H1 (cell line): ENCODE measurements at regions of chr1 and their contacts with region 1.

Region 1: DNA sequence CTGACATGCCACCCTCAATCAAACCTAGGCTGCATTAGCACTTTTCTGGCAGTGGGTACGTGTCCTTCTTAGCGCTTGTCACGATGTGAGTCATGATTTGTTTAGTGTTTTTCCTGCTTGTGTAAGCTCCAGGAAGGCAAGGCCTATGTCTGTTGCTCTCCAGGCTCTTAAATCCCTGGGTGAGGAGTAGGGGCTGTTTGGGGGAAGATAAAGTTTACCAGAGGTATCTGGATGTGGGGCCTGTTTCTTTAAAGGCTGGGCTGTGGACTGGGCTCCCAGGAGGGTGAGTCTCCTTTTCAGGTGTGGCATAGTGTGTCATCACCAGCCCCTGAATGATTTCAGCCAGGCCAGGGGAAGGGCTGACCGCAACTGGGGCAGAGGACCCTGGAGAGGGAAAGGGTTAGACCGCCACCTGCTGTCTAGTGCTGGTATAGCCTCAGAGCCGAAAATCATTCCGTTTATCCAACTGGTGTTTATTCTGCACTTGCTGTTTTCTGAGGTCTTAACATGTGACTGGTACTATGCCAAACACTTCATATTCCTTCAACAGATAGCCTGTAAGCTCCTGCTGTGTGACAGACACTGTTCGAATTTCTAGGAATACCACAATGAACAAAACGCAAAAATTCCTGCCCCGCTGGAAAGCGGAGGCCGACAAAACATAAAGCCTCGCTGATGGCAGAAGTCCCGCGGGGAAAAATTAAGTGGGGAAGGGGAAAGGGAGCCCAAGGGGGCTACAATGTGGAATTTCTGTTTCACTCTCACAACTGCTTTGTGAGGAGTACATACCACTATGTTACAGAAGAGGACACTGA is 9.7 kb downstream of the SERINC2 start:
- DNase-seq: peak in 1 of 2 experiments; percentile 95
- H3K4me3 ChIP-seq: no peak overlapping the region
- H3K27ac ChIP-seq: no peak overlapping the region
- H3K4me1 ChIP-seq: peaks cover 0 to 3% (median 2%) of the 10 kb centered on the region in 4 experiments; a peak in 1 of 7 replicates
- H3K27me3 ChIP-seq: no peaks in the 10 kb centered on the region
- CTCF ChIP-seq: peak; percentile 88 to 98 (median 88)
- EP300 ChIP-seq: no peak
- POLR2A ChIP-seq: no peak
- RAD21 ChIP-seq: peak; percentile 95 to 97

Region 2: GRCh38 chr1:31335007-31335406 is 87.7 kb before region 1 on chr1:
- CTCF ChIA-PET with region 1: interaction called, 11 read pairs
- POLR2A ChIA-PET with region 1: no interaction called
- DNase-seq: no peak
- H3K4me3 ChIP-seq: no peak overlapping the region
- H3K27ac ChIP-seq: no peak overlapping the region
- H3K4me1 ChIP-seq: no peaks in the 10 kb centered on the region
- H3K27me3 ChIP-seq: no peaks in the 10 kb centered on the region
- CTCF ChIP-seq: peak in 2 of 3 experiments; percentile 44 to 51; a peak in 3 of 4 replicates
- EP300 ChIP-seq: no peak
- POLR2A ChIP-seq: no peak
- RAD21 ChIP-seq: peak; percentile 62 to 69

Region 3: DNA sequence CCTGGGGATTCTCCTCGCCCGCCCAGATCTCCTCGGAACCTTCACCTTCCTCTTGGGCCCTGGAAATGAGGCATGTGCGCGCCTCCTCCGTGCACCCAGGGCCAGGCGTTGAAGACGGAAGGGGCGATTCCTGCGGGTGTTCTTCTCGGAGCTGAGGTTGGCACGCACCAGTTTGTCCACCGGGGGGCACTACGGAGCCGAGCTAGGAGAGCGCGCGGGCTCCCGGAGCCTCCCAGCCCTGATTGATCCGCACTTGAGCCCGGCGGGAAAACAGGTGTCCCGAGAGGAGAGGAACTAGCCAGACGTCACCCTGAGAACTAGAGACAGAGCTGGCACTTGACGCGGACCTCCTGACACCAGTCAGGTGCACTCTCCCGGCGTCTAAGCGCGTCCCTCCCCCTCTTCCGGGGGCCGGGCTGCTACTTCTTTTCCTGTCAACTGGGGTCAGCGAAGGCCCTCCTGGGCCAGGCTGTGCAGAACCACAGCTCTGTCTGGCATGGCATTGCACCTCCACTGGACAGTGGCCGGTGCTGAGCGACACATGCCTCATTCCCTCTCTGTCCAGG is 28.0 kb before region 1 on chr1:
- CTCF ChIA-PET with region 1: interaction called, 415 read pairs
- POLR2A ChIA-PET with region 1: interaction called, 5 read pairs
- DNase-seq: peak; percentile 79 to 98
- H3K4me3 ChIP-seq: peak overlapping the region in 3 of 4 experiments; percentile 34 to 51 (median 47); a peak in 6 of 8 replicates
- H3K27ac ChIP-seq: no peak overlapping the region
- H3K4me1 ChIP-seq: peaks cover 0 to 4% (median 3%) of the 10 kb centered on the region in 4 experiments; a peak in 4 of 7 replicates
- H3K27me3 ChIP-seq: no peaks in the 10 kb centered on the region
- CTCF ChIP-seq: peak; percentile 85 to 93 (median 92)
- EP300 ChIP-seq: no peak
- POLR2A ChIP-seq: no peak
- RAD21 ChIP-seq: peak; percentile 82 to 86

Region 4: DNA sequence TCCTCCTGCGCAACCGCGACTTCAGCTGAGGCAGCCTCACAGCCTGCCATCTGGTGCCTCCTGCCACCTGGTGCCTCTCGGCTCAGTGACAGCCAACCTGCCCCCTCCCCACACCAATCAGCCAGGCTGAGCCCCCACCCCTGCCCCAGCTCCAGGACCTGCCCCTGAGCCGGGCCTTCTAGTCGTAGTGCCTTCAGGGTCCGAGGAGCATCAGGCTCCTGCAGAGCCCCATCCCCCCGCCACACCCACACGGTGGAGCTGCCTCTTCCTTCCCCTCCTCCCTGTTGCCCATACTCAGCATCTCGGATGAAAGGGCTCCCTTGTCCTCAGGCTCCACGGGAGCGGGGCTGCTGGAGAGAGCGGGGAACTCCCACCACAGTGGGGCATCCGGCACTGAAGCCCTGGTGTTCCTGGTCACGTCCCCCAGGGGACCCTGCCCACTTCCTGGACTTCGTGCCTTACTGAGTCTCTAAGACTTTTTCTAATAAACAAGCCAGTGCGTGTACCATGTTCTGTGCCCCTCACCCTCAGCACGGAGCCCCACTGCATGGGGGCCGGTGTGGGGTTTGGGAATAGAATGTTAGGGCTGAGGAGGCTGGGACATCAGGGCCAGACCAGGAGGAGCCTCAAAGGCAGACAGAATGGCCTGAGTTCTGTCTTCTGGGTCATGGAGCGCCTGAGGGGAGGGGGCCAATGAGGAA is 11.6 kb after region 1 on chr1:
- CTCF ChIA-PET with region 1: interaction called, 37 read pairs
- POLR2A ChIA-PET with region 1: interaction called, 4 read pairs
- DNase-seq: no peak
- H3K4me3 ChIP-seq: no peak overlapping the region
- H3K27ac ChIP-seq: no peak overlapping the region
- H3K4me1 ChIP-seq: peaks cover 0 to 5% (median 3%) of the 10 kb centered on the region in 4 experiments; a peak in 4 of 7 replicates
- H3K27me3 ChIP-seq: no peaks in the 10 kb centered on the region
- CTCF ChIP-seq: no peak
- EP300 ChIP-seq: no peak
- POLR2A ChIP-seq: no peak
- RAD21 ChIP-seq: no peak

Region 5: DNA sequence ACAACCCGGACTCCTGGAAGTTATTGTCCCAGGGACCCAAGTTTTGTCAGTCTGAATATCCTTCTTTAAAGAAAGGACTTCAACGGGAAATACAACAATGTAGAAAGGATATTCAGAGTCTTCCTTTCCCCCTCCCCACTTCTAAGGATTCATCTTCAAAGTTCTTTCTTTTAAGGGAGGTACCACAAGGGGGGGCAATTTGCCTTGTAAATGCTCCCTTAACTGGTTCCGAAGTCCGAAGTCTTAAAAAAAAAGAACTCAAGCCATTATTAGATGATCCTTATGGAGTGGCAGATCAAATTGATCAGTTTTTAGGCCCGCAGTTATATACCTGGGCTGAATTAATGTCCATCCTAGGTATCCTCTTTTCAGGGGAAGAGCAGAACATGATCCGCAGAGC is 37.3 kb after region 1 on chr1:
- CTCF ChIA-PET with region 1: interaction called, 15 read pairs
- POLR2A ChIA-PET with region 1: no interaction called
- DNase-seq: no peak
- H3K4me3 ChIP-seq: no peak overlapping the region
- H3K27ac ChIP-seq: no peak overlapping the region
- H3K4me1 ChIP-seq: peaks cover 0 to 5% (median 0%) of the 10 kb centered on the region in 4 experiments; a peak in 2 of 7 replicates
- H3K27me3 ChIP-seq: no peaks in the 10 kb centered on the region; a peak in 1 of 7 replicates
- CTCF ChIP-seq: peak in 2 of 3 experiments; percentile 43 to 51; a peak in 2 of 4 replicates
- EP300 ChIP-seq: no peak
- POLR2A ChIP-seq: no peak
- RAD21 ChIP-seq: peak; percentile 66 to 73

Region 6: DNA sequence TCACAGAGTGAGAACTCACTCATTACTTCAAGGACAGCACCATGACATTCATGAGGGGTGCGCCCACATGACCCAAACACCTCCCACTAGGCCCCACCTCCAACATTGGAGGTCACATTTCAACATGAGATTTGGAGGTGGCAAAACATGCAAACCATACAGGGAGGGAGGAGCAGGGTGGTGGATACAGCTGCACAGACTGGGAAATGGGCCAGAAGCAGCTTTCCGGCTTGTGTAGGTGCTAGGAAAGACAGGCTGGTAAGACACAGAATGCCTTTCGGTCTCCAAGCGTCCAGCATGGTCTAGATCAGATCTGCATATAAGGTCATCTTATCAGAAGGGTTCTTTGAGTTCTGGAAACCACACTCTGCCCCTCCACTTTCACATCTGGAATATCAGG is 118.5 kb after region 1 on chr1:
- CTCF ChIA-PET with region 1: interaction called, 22 read pairs
- POLR2A ChIA-PET with region 1: no interaction called
- DNase-seq: no peak
- H3K4me3 ChIP-seq: no peak overlapping the region
- H3K27ac ChIP-seq: no peak overlapping the region
- H3K4me1 ChIP-seq: no peaks in the 10 kb centered on the region; a peak in 1 of 7 replicates
- H3K27me3 ChIP-seq: no peaks in the 10 kb centered on the region; a peak in 1 of 7 replicates
- CTCF ChIP-seq: no peak
- EP300 ChIP-seq: no peak
- POLR2A ChIP-seq: no peak
- RAD21 ChIP-seq: no peak